PC-9 (cell line): ENCODE measurements at regions of chr9 and their contacts with region 1.

Region 1: GRCh38 chr9:2158111-2158610 is 143.0 kb downstream of the SMARCA2 start:
- DNase-seq: peak; percentile 25 to 62
- H3K4me3 ChIP-seq: peak overlapping the region; percentile 65
- H3K27ac ChIP-seq: no peak overlapping the region
- H3K4me1 ChIP-seq: peaks cover 7% of the 10 kb centered on the region; the same call in 1 of the 2 replicates
- H3K27me3 ChIP-seq: no peaks in the 10 kb centered on the region
- CTCF ChIP-seq: no peak; the same call in 1 of the 2 replicates

Region 2: DNA sequence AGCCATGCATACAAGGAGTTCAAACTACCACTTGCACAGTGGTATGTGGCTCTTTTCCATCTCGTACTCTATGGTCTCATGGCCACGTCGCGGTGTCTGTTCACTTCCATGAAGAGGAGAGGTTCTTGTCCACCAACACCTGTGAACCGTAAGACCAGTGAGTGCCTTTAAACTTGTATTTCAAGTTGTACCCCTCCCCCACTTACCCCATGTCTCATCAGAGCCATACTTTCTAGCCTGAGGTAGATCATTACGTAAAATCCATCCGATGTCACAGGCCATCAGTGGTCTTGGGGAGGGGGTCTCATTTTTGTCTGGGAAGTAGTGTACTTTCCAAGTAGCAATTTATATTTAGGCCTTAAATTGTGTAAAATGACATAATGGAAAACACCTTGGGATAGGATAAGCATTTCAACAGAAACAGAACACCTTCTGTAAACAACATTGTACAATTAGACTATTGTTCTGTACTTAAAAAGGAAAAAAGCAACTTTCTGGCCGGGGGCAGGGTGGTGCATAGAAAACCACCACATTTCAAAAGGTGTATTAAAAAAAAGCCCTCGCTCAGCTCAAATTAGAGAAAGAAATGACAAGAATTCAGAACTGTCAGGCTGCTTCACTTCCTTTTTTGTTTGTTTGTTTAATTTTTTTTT is 20.0 kb after region 1 on chr9:
- CTCF ChIA-PET with region 1: no interaction called
- POLR2A ChIA-PET with region 1: no interaction called
- intact Hi-C with region 1: no loop called
- DNase-seq: no peak
- H3K4me3 ChIP-seq: no peak overlapping the region
- H3K27ac ChIP-seq: no peak overlapping the region
- H3K4me1 ChIP-seq: no peaks in the 10 kb centered on the region
- H3K27me3 ChIP-seq: no peaks in the 10 kb centered on the region
- CTCF ChIP-seq: no peak

Region 3: GRCh38 chr9:2228132-2228531 is 70.0 kb after region 1 on chr9:
- CTCF ChIA-PET with region 1: no interaction called
- POLR2A ChIA-PET with region 1: no interaction called
- intact Hi-C with region 1: loop called (anchors 5 kb)
- DNase-seq: no peak
- H3K4me3 ChIP-seq: no peak overlapping the region
- H3K27ac ChIP-seq: no peak overlapping the region
- H3K4me1 ChIP-seq: peaks cover 7% of the 10 kb centered on the region; the same call in 1 of the 2 replicates
- H3K27me3 ChIP-seq: no peaks in the 10 kb centered on the region
- CTCF ChIP-seq: peak; percentile 24; the same call in 1 of the 2 replicates

Region 4: GRCh38 chr9:2241836-2242741 is 83.9 kb after region 1 on chr9:
- CTCF ChIA-PET with region 1: no interaction called
- POLR2A ChIA-PET with region 1: no interaction called
- intact Hi-C with region 1: loop called (anchors 1 kb)
- DNase-seq: peak; percentile 61 to 75
- H3K4me3 ChIP-seq: peak overlapping the region; percentile 68
- H3K27ac ChIP-seq: peak overlapping the region; percentile 39
- H3K4me1 ChIP-seq: 0 out of 2 replicates have a peak, but pooled peaks cover 4% of the 10 kb centered on the region
- H3K27me3 ChIP-seq: no peaks in the 10 kb centered on the region
- CTCF ChIP-seq: no peak

Region 5: GRCh38 chr9:2291980-2292665 is 134.0 kb after region 1 on chr9:
- CTCF ChIA-PET with region 1: no interaction called
- POLR2A ChIA-PET with region 1: no interaction called
- intact Hi-C with region 1: no loop called
- DNase-seq: peak; percentile 49 to 92
- H3K4me3 ChIP-seq: peak overlapping the region; percentile 34; the same call in 1 of the 2 replicates
- H3K27ac ChIP-seq: peak overlapping the region; percentile 97
- H3K4me1 ChIP-seq: peaks cover 27% of the 10 kb centered on the region
- H3K27me3 ChIP-seq: no peaks in the 10 kb centered on the region
- CTCF ChIP-seq: no peak